Psoas muscle (tissue), 8 donors: ENCODE measurements at regions of chr21 and their contacts with region 1.

Region 1: DNA sequence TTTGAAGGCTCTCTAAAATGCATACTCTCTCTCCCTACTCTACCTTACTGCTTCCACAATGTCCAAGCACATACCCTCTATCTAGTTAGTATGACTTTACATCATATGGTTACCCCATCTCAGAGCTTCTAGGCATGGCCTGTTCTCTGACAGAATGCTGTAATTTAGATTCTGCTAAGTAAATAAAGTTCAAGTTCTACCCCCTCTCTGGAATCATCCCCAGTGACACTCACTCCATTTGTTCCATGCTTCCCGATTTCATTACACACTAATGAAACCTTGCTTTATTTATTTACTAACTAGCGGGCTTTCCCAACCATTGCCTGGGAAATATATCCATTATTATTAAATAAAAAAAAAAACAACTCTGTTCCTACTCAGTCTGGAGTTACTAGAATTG is 7.3 kb downstream of the CRYZL1 start:
- DNase-seq: no peak
- ATAC-seq: no peak
- H3K4me3 ChIP-seq: no peak overlapping the region
- H3K27ac ChIP-seq: no peak overlapping the region
- H3K4me1 ChIP-seq: no peaks in the 10 kb centered on the region
- H3K27me3 ChIP-seq: no peaks in the 10 kb centered on the region
- CTCF ChIP-seq: no peak

Region 2: GRCh38 chr21:33734291-33734690 is 100.0 kb after region 1 on chr21:
- intact Hi-C with region 1: no loop called
- DNase-seq: no peak
- ATAC-seq: no peak
- H3K4me3 ChIP-seq: no peak overlapping the region
- H3K27ac ChIP-seq: no peak overlapping the region
- H3K4me1 ChIP-seq: no peaks in the 10 kb centered on the region
- H3K27me3 ChIP-seq: no peaks in the 10 kb centered on the region
- CTCF ChIP-seq: no peak

Region 3: DNA sequence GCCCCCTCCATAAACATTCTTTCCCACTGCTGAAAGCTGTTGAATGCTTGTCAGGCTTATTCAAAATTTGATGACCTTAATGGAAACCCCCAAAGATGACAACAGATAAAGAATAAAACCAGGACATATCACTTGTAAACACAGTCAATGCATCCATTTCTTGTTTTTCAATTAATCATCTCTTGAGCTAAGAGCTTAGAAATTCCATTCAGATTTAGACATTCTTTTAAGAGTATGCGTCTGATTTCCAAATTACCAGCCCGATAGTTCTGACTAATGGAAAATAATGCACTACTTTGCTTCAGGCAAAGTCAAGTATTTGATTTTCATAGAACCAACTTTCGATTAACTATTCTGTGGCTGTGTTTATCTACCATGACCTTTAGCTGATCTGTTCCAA is 1515.4 kb after region 1 on chr21:
- intact Hi-C with region 1: loop called in 1 of 2 experiments (anchors 5 kb)
- DNase-seq: no peak
- ATAC-seq: no peak
- H3K4me3 ChIP-seq: no peak overlapping the region
- H3K27ac ChIP-seq: no peak overlapping the region
- H3K4me1 ChIP-seq: no peaks in the 10 kb centered on the region
- H3K27me3 ChIP-seq: no peaks in the 10 kb centered on the region
- CTCF ChIP-seq: no peak